CD4-positive, alpha-beta T cell (primary cell): ENCODE measurements at regions of chr17 and their contacts with region 1.

Region 1: GRCh38 chr17:58631523-58632323 is 60.1 kb downstream of the TEX14 start:
- DNase-seq: peak; percentile 85 to 97 (median 90)
- ATAC-seq: peak; percentile 89
- H3K4me3 ChIP-seq: peak overlapping the region; percentile 54
- H3K4me3 Mint-ChIP-seq: no peak overlapping the region
- H3K27ac ChIP-seq: peak overlapping the region; percentile 66 to 94
- H3K27ac Mint-ChIP-seq: no peak overlapping the region
- H3K4me1 ChIP-seq: peaks cover 10% of the 10 kb centered on the region
- H3K4me1 Mint-ChIP-seq: no peaks in the 10 kb centered on the region
- H3K27me3 ChIP-seq: no peaks in the 10 kb centered on the region
- H3K27me3 Mint-ChIP-seq: no peaks in the 10 kb centered on the region
- CTCF ChIP-seq: no peak

Region 2: DNA sequence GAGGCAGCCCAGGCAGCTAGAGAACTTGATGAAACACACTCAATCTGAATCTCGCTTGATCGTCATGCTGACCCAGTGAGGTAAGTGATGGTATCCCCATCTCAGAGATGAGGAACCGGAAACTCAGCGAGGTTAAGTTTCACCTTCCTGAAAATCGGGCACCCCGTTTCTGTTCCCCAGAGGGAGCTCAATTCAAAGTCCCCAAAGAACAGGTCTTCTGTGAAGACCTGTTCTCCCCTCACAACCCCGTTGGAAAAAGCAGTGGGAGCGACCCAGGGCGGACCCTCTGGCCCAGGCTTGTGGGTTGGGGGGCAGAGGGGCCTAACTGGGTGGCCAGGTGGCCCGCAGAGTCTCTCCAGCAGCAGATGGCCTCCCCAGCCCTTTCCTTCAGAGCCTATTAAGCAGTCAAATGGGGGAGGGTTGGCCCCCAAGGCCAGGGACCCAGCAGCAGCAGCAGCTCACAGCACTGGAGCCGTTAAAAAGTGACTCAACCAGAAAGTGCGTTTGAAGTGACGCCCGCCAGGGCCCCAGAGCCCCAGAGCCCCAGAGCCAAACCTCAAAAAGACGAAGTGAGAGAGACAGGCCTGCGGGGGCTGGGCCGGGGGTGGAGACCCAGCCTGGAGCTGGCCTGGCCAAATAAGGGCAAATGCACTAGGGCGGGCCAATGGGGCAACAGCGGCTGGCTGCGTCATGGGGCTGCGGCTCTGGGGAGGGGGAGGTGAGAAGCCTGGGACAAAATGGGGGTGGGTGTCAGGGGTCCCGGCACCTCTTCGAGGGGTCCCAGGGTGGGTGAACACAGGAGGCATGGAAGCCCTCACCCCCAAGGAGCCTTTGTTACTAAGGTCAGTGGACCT is 293.9 kb before region 1 on chr17:
- CTCF ChIA-PET with region 1: no interaction called
- POLR2A ChIA-PET with region 1: interaction called, 7 read pairs
- intact Hi-C with region 1: loop called in 1 of 2 experiments (anchors 10 kb)
- DNase-seq: peak; percentile 78 to 96 (median 88)
- ATAC-seq: peak; percentile 73
- H3K4me3 ChIP-seq: peak overlapping the region; percentile 84
- H3K4me3 Mint-ChIP-seq: peak overlapping the region; percentile 90
- H3K27ac ChIP-seq: peak overlapping the region; percentile 97 to 98
- H3K27ac Mint-ChIP-seq: peak overlapping the region; percentile 84
- H3K4me1 ChIP-seq: peaks cover 96% of the 10 kb centered on the region
- H3K4me1 Mint-ChIP-seq: peaks cover 92% of the 10 kb centered on the region
- H3K27me3 ChIP-seq: no peaks in the 10 kb centered on the region
- H3K27me3 Mint-ChIP-seq: no peaks in the 10 kb centered on the region
- CTCF ChIP-seq: no peak

Region 3: GRCh38 chr17:58587702-58588254 is 43.9 kb before region 1 on chr17:
- CTCF ChIA-PET with region 1: interaction called, 5 read pairs
- POLR2A ChIA-PET with region 1: interaction called, 6 read pairs
- intact Hi-C with region 1: loop called in 1 of 2 experiments (anchors 1 kb)
- DNase-seq: peak; percentile 33 to 81 (median 47)
- ATAC-seq: peak; percentile 92
- H3K4me3 ChIP-seq: no peak overlapping the region
- H3K4me3 Mint-ChIP-seq: no peak overlapping the region
- H3K27ac ChIP-seq: no peak overlapping the region
- H3K27ac Mint-ChIP-seq: no peak overlapping the region
- H3K4me1 ChIP-seq: peaks cover 5% of the 10 kb centered on the region
- H3K4me1 Mint-ChIP-seq: peaks cover 4% of the 10 kb centered on the region
- H3K27me3 ChIP-seq: no peaks in the 10 kb centered on the region
- H3K27me3 Mint-ChIP-seq: peaks cover 8% of the 10 kb centered on the region
- CTCF ChIP-seq: peak; percentile 91

Region 4: GRCh38 chr17:58658804-58659713 is 27.3 kb after region 1 on chr17:
- CTCF ChIA-PET with region 1: interaction called, 3 read pairs
- POLR2A ChIA-PET with region 1: interaction called, 54 read pairs
- intact Hi-C with region 1: loop called (anchors 1 kb)
- DNase-seq: peak; percentile 48 to 93 (median 66)
- ATAC-seq: peak; percentile 85
- H3K4me3 ChIP-seq: peak overlapping the region; percentile 58
- H3K4me3 Mint-ChIP-seq: peak overlapping the region; percentile 85
- H3K27ac ChIP-seq: peak overlapping the region; percentile 79 to 96
- H3K27ac Mint-ChIP-seq: peak overlapping the region; percentile 97
- H3K4me1 ChIP-seq: peaks cover 12% of the 10 kb centered on the region
- H3K4me1 Mint-ChIP-seq: peaks cover 15% of the 10 kb centered on the region
- H3K27me3 ChIP-seq: no peaks in the 10 kb centered on the region
- H3K27me3 Mint-ChIP-seq: peaks cover 5% of the 10 kb centered on the region
- CTCF ChIP-seq: no peak

Region 5: GRCh38 chr17:58679263-58680037 is 47.7 kb after region 1 on chr17:
- CTCF ChIA-PET with region 1: no interaction called
- POLR2A ChIA-PET with region 1: no interaction called
- intact Hi-C with region 1: no loop called
- DNase-seq: no peak
- ATAC-seq: no peak
- H3K4me3 ChIP-seq: no peak overlapping the region
- H3K4me3 Mint-ChIP-seq: no peak overlapping the region
- H3K27ac ChIP-seq: no peak overlapping the region
- H3K27ac Mint-ChIP-seq: no peak overlapping the region
- H3K4me1 ChIP-seq: no peaks in the 10 kb centered on the region
- H3K4me1 Mint-ChIP-seq: no peaks in the 10 kb centered on the region
- H3K27me3 ChIP-seq: no peaks in the 10 kb centered on the region
- H3K27me3 Mint-ChIP-seq: peaks cover 3% of the 10 kb centered on the region
- CTCF ChIP-seq: no peak

Region 6: GRCh38 chr17:58755577-58756245 is 124.0 kb after region 1 on chr17 and contains the start of gene PPM1E:
- CTCF ChIA-PET with region 1: no interaction called
- POLR2A ChIA-PET with region 1: no interaction called
- intact Hi-C with region 1: no loop called
- DNase-seq: peak in 12 of 14 experiments; percentile 8 to 57 (median 26)
- ATAC-seq: peak; percentile 73
- H3K4me3 ChIP-seq: peak within 1 kb of the TSS; percentile 67
- H3K4me3 Mint-ChIP-seq: peak within 1 kb of the TSS; percentile 91
- H3K27ac ChIP-seq: no peak within 1 kb of the TSS
- H3K27ac Mint-ChIP-seq: no peak within 1 kb of the TSS
- H3K4me1 ChIP-seq: peaks cover 14% of the 10 kb centered on the region
- H3K4me1 Mint-ChIP-seq: peaks cover 6% of the 10 kb centered on the region
- H3K27me3 ChIP-seq: peaks cover 34 to 46% of the 10 kb centered on the region in 2 experiments
- H3K27me3 Mint-ChIP-seq: peaks cover 76% of the 10 kb centered on the region
- CTCF ChIP-seq: no peak
- total RNA-seq, gene PPM1E: not detected

Region 7: GRCh38 chr17:59565171-59565969 is 933.6 kb after region 1 on chr17 and contains the start of gene DHX40:
- CTCF ChIA-PET with region 1: no interaction called
- POLR2A ChIA-PET with region 1: interaction called, 7 read pairs
- intact Hi-C with region 1: loop called in 1 of 2 experiments (anchors 5 kb)
- DNase-seq: peak; percentile 86 to 99 (median 92)
- ATAC-seq: peak; percentile 87
- H3K4me3 ChIP-seq: peak within 1 kb of the TSS; percentile 90
- H3K4me3 Mint-ChIP-seq: peak within 1 kb of the TSS; percentile 100
- H3K27ac ChIP-seq: peak within 1 kb of the TSS; percentile 86 to 91
- H3K27ac Mint-ChIP-seq: peak within 1 kb of the TSS; percentile 97
- H3K4me1 ChIP-seq: peaks cover 13% of the 10 kb centered on the region
- H3K4me1 Mint-ChIP-seq: peaks cover 26% of the 10 kb centered on the region
- H3K27me3 ChIP-seq: no peaks in the 10 kb centered on the region
- H3K27me3 Mint-ChIP-seq: no peaks in the 10 kb centered on the region
- CTCF ChIP-seq: no peak
- total RNA-seq, gene DHX40: 62.6 to 65.6 TPM